ENCODE measurements at regions of chr20 and their contacts with region 1.

Region 1: GRCh38 chr20:34558320-34559218 is at the start of gene MAP1LC3A:
- DNase-seq: peak in 1 of 2 experiments; percentile 41
- H3K4me3 ChIP-seq: no peak within 1 kb of the TSS
- H3K27ac ChIP-seq: no peak within 1 kb of the TSS
- H3K4me1 ChIP-seq: no peaks in the 10 kb centered on the region
- H3K27me3 ChIP-seq: no peaks in the 10 kb centered on the region
- CTCF ChIP-seq: no peak
- total RNA-seq, gene MAP1LC3A: not detected in 2 replicates

Region 2: DNA sequence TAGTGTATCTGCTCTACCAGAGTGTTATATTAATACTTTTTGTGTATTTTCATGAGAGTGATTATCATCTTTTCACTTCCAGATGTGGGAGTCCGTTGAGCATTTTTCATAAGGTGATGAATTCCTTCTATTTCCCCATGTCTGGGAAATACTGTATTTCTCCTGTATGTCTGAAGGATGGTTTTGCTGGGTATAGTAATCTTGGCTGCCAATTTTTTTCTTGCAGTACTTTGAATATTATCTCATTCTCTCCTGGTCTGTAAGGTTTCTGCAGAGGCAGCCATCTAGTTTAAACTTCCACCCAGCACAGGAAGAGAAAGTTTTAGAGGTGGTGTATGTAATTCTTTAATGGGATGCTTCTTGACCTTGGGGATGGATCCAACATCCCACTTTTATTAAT is 57.7 kb before region 1 on chr20:
- CTCF ChIA-PET with region 1: no interaction called
- POLR2A ChIA-PET with region 1: no interaction called
- intact Hi-C with region 1: no loop called
- DNase-seq: no peak
- H3K4me3 ChIP-seq: no peak overlapping the region
- H3K27ac ChIP-seq: no peak overlapping the region
- H3K4me1 ChIP-seq: no peaks in the 10 kb centered on the region
- H3K27me3 ChIP-seq: no peaks in the 10 kb centered on the region
- CTCF ChIP-seq: no peak

Region 3: GRCh38 chr20:34547844-34548613 is 10.5 kb before region 1 on chr20:
- CTCF ChIA-PET with region 1: interaction called, 20 read pairs
- POLR2A ChIA-PET with region 1: no interaction called
- intact Hi-C with region 1: no loop called
- DNase-seq: no peak
- H3K4me3 ChIP-seq: no peak overlapping the region
- H3K27ac ChIP-seq: no peak overlapping the region
- H3K4me1 ChIP-seq: peaks cover 6% of the 10 kb centered on the region; the same call in 1 of the 2 replicates
- H3K27me3 ChIP-seq: no peaks in the 10 kb centered on the region
- CTCF ChIP-seq: no peak

Region 4: GRCh38 chr20:34615477-34615876 is 56.9 kb after region 1 on chr20:
- CTCF ChIA-PET with region 1: no interaction called
- POLR2A ChIA-PET with region 1: no interaction called
- intact Hi-C with region 1: no loop called
- DNase-seq: no peak
- H3K4me3 ChIP-seq: no peak overlapping the region
- H3K27ac ChIP-seq: no peak overlapping the region
- H3K4me1 ChIP-seq: no peaks in the 10 kb centered on the region
- H3K27me3 ChIP-seq: no peaks in the 10 kb centered on the region
- CTCF ChIP-seq: no peak

Region 5: DNA sequence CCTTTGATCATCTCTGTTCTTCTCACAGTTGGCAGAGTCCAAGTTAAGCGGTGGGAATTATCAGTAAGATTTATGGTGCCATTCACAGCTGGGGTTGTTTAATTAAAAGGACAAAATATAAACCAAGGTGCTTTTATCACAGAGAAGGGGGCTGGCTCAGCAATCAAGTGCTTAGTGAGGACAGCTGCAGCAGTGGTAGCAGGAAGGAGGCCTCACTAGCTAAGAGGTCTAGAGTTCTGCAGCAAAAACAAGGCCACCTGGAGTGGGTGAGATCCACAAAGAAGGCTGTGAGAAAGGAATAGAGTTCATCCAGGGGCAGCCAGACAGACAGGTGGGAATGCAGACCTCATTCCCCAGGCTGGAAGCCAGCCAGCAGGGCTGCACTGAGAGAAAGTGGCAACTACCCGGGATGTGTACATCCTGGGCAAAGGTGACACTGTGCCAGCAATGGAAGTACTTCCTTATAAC is 81.2 kb after region 1 on chr20:
- CTCF ChIA-PET with region 1: no interaction called
- POLR2A ChIA-PET with region 1: no interaction called
- intact Hi-C with region 1: no loop called
- DNase-seq: peak; percentile 27 to 38
- H3K4me3 ChIP-seq: no peak overlapping the region
- H3K27ac ChIP-seq: no peak overlapping the region
- H3K4me1 ChIP-seq: no peaks in the 10 kb centered on the region
- H3K27me3 ChIP-seq: no peaks in the 10 kb centered on the region
- CTCF ChIP-seq: no peak

Measured in PC-9 (cell line).